Right ventricle myocardium superior (tissue), 1 donor: ENCODE measurements at regions of chr7 and their contacts with region 1.

Region 1: GRCh38 chr7:137898839-137899721 is 52.3 kb upstream of the DGKI start:
- DNase-seq: peak; percentile 90
- ATAC-seq: peak; percentile 95

Region 2: GRCh38 chr7:137656227-137656849 is 242.7 kb before region 1 on chr7:
- intact Hi-C with region 1: loop called (anchors 2 kb)
- DNase-seq: peak; percentile 85
- ATAC-seq: peak; percentile 93

Region 3: GRCh38 chr7:138008547-138009349 is 109.7 kb after region 1 on chr7:
- intact Hi-C with region 1: loop called (anchors 2 kb)
- DNase-seq: no peak
- ATAC-seq: peak; percentile 77

Region 4: DNA sequence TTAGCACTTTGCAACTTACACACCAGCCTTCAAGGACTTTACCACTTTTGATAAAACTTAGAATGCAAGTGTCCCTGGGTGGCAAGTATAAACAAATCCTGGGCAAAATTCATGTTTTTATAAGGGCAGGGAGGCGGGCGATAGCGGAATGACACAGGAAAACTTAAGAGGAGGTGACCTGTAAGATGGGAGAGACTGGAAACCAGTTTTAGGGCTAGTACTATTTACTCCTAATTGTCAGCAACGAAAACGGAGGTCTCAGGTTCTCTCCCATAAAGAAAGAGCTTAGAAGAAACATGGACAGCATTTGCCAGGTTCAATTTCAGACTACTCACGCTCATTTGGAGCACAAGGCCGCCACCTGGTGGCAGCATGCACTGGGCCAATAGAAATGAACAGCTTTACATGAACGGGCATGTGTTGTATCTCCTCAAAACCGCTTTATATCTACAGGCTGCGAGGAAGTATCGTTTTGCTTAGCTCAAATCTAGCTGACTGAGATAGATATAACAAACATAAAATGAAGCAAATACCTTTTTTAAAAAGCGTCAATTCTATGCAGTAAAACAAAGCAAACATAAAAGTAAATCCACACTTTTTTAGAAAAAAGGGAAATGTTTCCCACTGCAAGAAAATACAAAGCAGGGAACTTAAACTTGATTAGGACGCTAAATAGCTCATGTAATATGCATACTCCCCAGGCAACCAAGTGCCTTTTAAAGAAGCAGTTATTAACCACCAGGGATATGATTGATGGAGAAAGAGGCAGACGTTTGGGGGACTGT is 839.7 kb after region 1 on chr7:
- intact Hi-C with region 1: loop called (anchors 10 kb)
- DNase-seq: peak; percentile 89
- ATAC-seq: peak; percentile 88